ENCODE measurements at regions of chrX and their contacts with region 1.

Region 1: DNA sequence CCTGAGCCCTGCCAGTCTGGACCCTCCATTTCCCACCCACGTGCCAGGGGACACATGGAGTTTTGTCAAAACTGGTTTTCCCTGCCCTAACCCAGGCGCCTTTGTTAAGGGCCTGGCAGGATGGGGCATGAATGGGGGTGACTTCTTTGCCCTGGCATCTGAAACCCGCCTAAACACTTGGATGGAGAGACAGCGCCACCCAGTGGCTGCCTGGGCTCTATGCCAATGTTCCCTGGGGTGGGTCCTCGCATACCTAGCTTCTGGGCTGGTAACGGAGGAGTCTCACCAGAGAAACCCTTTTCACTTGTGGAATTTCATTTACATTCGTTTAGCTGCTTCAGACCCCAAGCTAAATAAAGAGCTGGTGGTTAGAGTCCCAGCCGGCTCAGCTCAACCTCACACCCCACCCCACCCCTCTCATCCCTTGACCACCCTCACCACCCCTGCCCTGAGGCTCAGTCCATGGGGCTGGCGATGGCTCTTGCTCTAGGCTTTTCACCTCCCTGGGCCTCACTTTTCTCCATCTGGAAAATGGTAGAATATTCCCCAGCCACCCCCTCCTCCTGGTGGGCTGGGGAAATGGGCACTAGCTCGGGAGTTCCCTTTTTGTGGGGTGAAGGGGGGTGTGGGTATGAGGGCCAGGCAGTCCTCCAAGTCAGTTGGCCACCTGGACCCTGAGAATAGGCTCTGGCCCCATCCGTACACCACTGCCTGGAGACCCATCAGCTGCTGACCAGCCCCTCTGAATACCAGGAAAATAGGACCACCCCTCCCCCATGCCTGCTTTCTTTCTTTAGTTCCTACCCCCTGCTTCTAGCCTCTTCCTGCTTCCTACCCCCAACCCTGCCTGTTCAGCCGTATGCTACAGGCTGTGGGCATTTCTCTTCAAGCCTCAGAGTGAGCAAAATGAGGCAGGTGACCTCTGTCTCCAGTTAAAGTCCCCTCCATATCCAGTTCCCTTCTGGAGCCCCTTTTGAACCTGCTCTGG is 57.1 kb upstream of the PJA1 start:
- DNase-seq: peak; percentile 38 to 95 (median 74)

Region 2: DNA sequence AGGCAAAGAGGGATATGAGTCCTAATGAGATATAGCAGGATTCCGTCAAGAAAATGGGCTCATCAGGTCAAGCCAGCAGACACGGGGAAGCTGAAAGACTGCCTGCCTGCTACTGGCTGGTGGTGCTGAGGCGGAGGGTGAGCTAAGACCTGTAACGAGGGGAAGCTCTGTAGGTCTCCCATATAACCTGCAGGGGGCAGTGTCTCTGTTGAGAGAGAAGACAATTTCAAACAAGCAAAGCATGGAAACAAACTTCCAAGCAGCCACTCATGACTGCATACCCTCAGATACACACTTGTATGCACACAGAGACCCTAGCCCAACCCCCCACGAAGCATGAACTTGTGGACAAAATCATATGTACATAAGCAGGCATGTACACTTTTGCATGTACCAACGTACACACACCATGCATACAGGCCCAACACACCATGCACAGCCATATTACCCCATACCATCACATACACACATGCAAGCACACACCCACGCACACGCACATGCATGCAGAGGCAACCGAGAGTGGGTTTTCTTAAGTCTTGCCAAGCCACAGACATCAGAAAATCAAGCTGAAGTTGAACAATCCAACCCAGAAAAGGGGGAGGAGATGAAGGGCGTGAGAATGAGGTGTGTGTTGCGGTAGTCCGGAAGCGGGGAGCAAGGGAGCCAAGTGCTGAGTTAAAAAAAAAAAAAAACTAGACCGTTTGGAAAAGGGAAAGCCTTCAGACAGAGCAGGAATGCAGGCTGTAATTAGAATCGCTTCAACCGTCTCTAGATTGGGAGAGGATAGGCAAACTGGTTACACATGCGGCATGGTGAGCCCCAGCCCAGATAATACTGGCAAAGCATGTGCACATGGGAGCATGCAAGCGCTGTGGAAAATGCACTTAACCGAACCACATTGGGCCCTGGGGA is 128.2 kb before region 1 on chrX:
- intact Hi-C with region 1: loop called (anchors 2 kb)
- DNase-seq: peak in 5 of 10 donors; percentile 18 to 47 (median 39)

Region 3: GRCh38 chrX:69158166-69158980 is 64.0 kb before region 1 on chrX:
- intact Hi-C with region 1: loop called (anchors 5 kb)
- DNase-seq: peak in 3 of 10 donors; percentile 25 to 74 (median 27)